T-cell (primary cell): ENCODE measurements at regions of chr4 and their contacts with region 1.

Region 1: GRCh38 chr4:153509724-153510123 is 43.6 kb downstream of the TMEM131L start:
- DNase-seq: no peak
- ATAC-seq: no peak
- H3K4me3 ChIP-seq: no peak overlapping the region
- H3K4me3 Mint-ChIP-seq: no peak overlapping the region
- H3K27ac ChIP-seq: no peak overlapping the region
- H3K27ac Mint-ChIP-seq: peak overlapping the region; percentile 15 to 55
- H3K4me1 ChIP-seq: peaks cover 16 to 21% of the 10 kb centered on the region in 2 experiments
- H3K4me1 Mint-ChIP-seq: peaks cover 85 to 87% (median 86%) of the 10 kb centered on the region in 3 donors
- H3K27me3 ChIP-seq: no peaks in the 10 kb centered on the region
- H3K27me3 Mint-ChIP-seq: no peaks in the 10 kb centered on the region

Region 2: DNA sequence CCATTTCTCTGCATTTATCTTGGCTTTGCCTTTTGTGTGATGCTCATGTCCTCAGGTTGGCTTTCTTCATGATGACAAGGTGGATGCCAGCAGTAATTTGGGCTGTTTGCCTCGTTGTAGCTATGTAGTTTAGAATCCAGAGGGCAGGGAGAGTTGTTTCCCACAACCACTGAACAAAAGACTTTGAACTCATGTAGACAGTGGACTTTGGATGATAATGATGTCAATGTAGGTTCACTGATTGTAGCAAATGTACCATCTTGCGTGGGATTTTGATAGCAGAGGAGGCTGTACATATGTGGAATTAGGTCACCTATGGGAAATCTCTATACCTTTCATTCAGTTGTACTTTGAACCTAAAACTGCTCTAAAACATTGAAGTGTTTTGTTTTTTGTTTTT is 123.9 kb before region 1 on chr4:
- CTCF ChIA-PET with region 1: no interaction called
- POLR2A ChIA-PET with region 1: no interaction called
- DNase-seq: no peak
- ATAC-seq: no peak
- H3K4me3 ChIP-seq: no peak overlapping the region
- H3K4me3 Mint-ChIP-seq: no peak overlapping the region
- H3K27ac ChIP-seq: no peak overlapping the region
- H3K27ac Mint-ChIP-seq: no peak overlapping the region
- H3K4me1 ChIP-seq: no peaks in the 10 kb centered on the region
- H3K4me1 Mint-ChIP-seq: no peaks in the 10 kb centered on the region
- H3K27me3 ChIP-seq: no peaks in the 10 kb centered on the region
- H3K27me3 Mint-ChIP-seq: no peaks in the 10 kb centered on the region

Region 3: DNA sequence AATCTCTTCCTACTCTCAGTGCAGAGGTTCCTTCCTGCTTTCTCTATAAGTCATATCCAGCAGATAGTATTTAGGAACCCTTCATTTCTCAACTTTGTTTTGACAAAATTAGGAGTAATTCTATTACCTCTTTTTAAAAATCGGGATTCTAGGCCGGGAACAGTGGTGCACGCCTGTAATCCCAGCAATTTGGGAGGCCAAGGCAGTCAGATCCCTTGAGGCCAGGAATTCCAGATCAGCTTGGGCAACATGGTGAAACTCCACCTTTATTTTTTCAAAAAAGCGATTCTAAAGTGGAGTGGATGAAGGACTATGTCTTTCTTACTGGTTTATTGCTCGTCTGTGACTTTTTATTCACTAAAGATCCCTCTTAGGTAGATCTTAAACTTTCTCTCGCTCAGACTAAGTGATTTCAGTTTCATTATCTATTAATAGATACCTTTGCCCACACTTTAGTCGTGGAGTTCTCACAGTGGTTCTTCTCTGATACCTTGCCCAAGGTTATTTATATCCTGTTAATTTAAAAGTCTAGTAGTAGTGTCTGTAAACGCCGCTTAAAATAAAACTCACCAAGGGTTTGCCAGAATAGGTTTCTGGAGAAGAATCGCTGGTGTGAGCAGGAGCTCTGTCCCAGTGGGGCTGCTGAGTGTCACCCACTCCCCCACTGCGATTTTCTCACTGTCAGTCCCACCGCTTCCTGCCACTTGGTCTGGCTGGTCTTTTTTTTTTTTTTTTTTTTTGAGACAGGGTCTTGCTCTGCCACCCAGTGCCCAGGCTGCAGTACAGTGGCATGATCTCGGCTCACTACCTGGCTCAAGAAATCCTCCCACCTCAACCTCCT is 70.6 kb before region 1 on chr4:
- CTCF ChIA-PET with region 1: no interaction called
- POLR2A ChIA-PET with region 1: interaction called in 1 of 2 experiments, 10 read pairs
- DNase-seq: peak in 31 of 35 experiments; percentile 4 to 62 (median 21)
- ATAC-seq: peak; percentile 76 to 86 (median 80)
- H3K4me3 ChIP-seq: peak overlapping the region; percentile 53 to 83
- H3K4me3 Mint-ChIP-seq: peak overlapping the region; percentile 78 to 82 (median 78)
- H3K27ac ChIP-seq: peak overlapping the region; percentile 90
- H3K27ac Mint-ChIP-seq: peak overlapping the region; percentile 89 to 94
- H3K4me1 ChIP-seq: peaks cover 12 to 23% of the 10 kb centered on the region in 2 experiments
- H3K4me1 Mint-ChIP-seq: peaks cover 38 to 51% (median 48%) of the 10 kb centered on the region in 3 donors
- H3K27me3 ChIP-seq: no peaks in the 10 kb centered on the region
- H3K27me3 Mint-ChIP-seq: no peaks in the 10 kb centered on the region